ENCODE measurements at regions of chr2 and their contacts with region 1.

Region 1: GRCh38 chr2:42835577-42836371 is 43.4 kb upstream of the HAAO start:
- DNase-seq: no peak
- ATAC-seq: peak; percentile 68
- H3K4me3 ChIP-seq: no peak overlapping the region
- H3K4me1 ChIP-seq: peaks cover 7% of the 10 kb centered on the region
- CTCF ChIP-seq: no peak

Region 2: GRCh38 chr2:42931146-42931817 is 95.5 kb after region 1 on chr2:
- intact Hi-C with region 1: loop called in 1 of 2 experiments (anchors 10 kb)
- DNase-seq: peak in 1 of 3 donors; percentile 69
- ATAC-seq: peak; percentile 33
- H3K4me3 ChIP-seq: no peak overlapping the region
- H3K4me1 ChIP-seq: peaks cover 51% of the 10 kb centered on the region
- CTCF ChIP-seq: no peak

Measured in mucosa of descending colon (tissue), 3 donors.